ENCODE measurements at regions of chr12 and their contacts with region 1.

Region 1: DNA sequence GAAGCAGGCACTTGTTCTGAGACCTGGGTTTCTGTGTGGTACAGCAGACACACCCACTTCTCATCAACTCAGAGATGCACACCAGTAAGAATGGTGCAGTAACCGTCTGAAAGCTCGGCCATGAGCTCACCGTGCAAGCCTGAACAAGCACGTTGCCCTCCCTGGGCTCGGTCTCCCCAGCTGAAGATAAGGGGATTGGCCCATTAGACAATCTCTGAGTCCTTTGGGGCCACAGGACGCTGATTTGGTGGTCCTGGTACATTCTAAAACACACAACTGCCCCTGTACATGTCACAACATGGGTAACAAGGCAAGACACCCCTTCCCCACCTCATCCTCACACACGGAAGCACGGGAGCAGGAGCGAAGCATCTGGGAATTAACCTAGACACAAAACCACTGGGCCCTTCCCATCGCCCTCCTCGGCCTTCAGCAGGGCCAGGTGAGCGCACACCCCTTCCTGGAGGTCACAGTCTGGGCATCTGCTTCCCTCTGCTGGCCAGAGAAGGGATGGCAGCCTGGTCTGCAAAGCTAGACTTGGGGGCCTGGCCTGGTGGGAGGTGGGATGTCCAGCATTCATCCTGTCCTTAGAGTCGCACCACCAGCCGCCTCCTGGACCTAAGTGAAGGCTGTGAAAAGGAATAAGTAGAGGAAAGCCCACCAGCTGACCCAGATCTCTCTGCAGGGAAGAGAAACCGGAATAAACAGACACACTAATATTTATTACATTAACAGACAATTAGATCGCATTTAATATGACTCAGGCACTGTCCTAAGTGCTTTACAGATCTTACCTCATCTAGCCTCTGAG is 18.9 kb upstream of the SMUG1 start:
- DNase-seq: peak; percentile 45 to 70
- ATAC-seq: peak; percentile 53 to 81 (median 72)
- H3K4me3 ChIP-seq: no peak overlapping the region
- H3K27ac ChIP-seq: no peak overlapping the region
- H3K4me1 ChIP-seq: no peaks in the 10 kb centered on the region
- H3K27me3 ChIP-seq: peaks cover 4 to 93% (median 61%) of the 10 kb centered on the region in 7 donors
- CTCF ChIP-seq: peak; percentile 64 to 91 (median 86)

Region 2: GRCh38 chr12:53701518-53702260 is 506.0 kb before region 1 on chr12:
- intact Hi-C with region 1: loop called in 1 of 10 experiments (anchors 10 kb)
- DNase-seq: peak; percentile 80 to 85
- ATAC-seq: peak; percentile 86 to 96 (median 95)
- H3K4me3 ChIP-seq: no peak overlapping the region
- H3K27ac ChIP-seq: no peak overlapping the region
- H3K4me1 ChIP-seq: peaks cover 0 to 10% (median 3%) of the 10 kb centered on the region in 9 donors
- H3K27me3 ChIP-seq: peaks cover 6 to 91% (median 68%) of the 10 kb centered on the region in 7 donors
- CTCF ChIP-seq: peak; percentile 69 to 97 (median 91)

Region 3: DNA sequence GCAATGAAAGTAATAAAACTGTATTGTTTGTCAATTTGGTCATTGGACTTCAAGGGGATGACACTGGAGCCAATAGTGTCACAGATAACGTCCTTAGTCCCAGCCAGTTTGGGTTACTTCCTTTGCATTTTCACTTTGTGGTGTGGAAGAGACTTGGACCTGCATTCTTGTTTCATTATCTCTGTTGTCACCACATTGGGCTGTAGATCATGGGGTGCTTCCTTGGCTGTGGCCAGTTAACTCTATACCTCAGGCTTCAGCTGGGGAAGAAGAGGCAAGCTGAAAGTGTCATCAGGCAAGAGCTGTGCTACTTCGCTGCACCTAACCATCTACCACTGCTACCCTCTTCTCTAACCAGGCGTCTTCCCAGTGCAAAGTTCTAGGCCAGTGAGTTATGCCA is 440.8 kb before region 1 on chr12:
- intact Hi-C with region 1: loop called in 1 of 10 experiments (anchors 10 kb)
- DNase-seq: no peak
- ATAC-seq: no peak
- H3K4me3 ChIP-seq: no peak overlapping the region
- H3K27ac ChIP-seq: no peak overlapping the region
- H3K4me1 ChIP-seq: no peaks in the 10 kb centered on the region
- H3K27me3 ChIP-seq: peaks cover 0 to 78% (median 63%) of the 10 kb centered on the region in 7 donors
- CTCF ChIP-seq: no peak